Colonic mucosa (tissue), 4 donors: ENCODE measurements at regions of chr2 and their contacts with region 1.

Region 1: DNA sequence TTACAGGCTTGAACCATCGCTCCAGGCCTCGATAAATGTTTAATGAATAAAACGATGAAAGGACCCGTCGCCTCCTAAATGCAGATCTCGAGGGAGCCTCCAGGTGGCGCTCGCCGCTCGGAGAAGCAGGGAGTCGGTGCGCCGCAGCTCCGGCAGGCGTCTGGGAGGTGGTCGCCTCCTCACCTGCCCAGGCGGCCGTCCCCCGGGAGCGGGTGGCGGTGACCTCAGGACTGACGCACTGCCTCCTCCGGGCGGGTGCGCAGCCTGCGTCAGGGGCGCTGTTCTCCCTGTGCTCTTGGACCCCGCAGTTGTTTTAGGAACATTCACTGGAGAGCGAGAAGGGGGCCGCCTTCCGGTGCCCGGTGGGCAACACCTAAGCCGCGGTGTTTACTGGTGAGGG is 38.6 kb upstream of the POLE4 start:
- DNase-seq: peak; percentile 73
- H3K4me3 ChIP-seq: peak overlapping the region; percentile 31
- H3K27ac ChIP-seq: no peak overlapping the region
- H3K4me1 ChIP-seq: no peaks in the 10 kb centered on the region
- H3K27me3 ChIP-seq: no peaks in the 10 kb centered on the region
- CTCF ChIP-seq: peak; percentile 75

Region 2: GRCh38 chr2:75403991-75404428 is 484.2 kb after region 1 on chr2:
- intact Hi-C with region 1: loop called (anchors 2 kb)
- DNase-seq: no peak
- H3K4me3 ChIP-seq: no peak overlapping the region
- H3K27ac ChIP-seq: no peak overlapping the region
- H3K4me1 ChIP-seq: no peaks in the 10 kb centered on the region
- H3K27me3 ChIP-seq: no peaks in the 10 kb centered on the region
- CTCF ChIP-seq: peak; percentile 58